ENCODE measurements at regions of chr2 and their contacts with region 1.

Region 1: DNA sequence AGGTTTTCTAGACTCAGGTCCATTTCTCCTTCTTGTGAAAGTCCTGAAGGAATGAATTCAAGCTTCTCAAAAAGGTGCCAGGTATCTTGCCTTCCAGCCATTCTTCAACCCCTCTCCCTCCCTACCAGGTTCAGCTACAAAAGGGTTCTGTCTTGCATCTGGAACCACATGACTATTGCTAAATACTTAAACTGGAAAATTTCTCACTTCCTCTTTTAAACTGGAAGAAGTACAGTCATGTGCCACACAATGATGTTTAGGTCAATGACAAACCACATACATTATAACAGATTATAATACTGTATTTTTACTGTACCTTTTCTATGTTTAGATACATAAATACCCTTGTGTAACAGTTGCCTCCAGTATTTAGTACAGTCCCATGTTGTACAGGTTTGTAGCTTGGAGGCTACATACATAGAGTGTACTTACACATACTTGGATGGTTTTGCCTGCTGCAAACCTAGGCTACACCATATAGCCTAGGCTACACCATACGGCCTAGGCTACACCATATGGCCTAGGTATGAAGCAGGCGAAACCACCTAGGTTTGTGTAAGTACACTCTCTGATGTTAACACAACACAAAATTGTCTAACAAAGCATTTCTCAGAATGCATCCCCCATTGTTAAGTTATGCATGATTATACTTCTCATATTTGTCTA is 142.0 kb upstream of the DNMT3A start:
- DNase-seq: no peak
- ATAC-seq: peak; percentile 90
- H3K4me3 ChIP-seq: no peak overlapping the region
- H3K27ac ChIP-seq: peak overlapping the region; percentile 54
- H3K4me1 ChIP-seq: peaks cover 9% of the 10 kb centered on the region
- H3K27me3 ChIP-seq: no peaks in the 10 kb centered on the region
- CTCF ChIP-seq: no peak
- EP300 ChIP-seq: peak; percentile 59 to 62; a peak in 2 of 4 replicates
- POLR2A ChIP-seq: no peak
- RAD21 ChIP-seq: no peak

Region 2: GRCh38 chr2:25467734-25468133 is 16.0 kb before region 1 on chr2:
- CTCF ChIA-PET with region 1: interaction called, 4 read pairs
- POLR2A ChIA-PET with region 1: no interaction called
- RAD21 ChIA-PET with region 1: interaction called, 5 read pairs
- SMC1A ChIA-PET with region 1: interaction called, 10 read pairs
- in situ Hi-C with region 1: no loop called
- intact Hi-C with region 1: no loop called
- DNase-seq: no peak
- ATAC-seq: no peak
- H3K4me3 ChIP-seq: no peak overlapping the region
- H3K27ac ChIP-seq: no peak overlapping the region
- H3K4me1 ChIP-seq: no peaks in the 10 kb centered on the region
- H3K27me3 ChIP-seq: no peaks in the 10 kb centered on the region
- CTCF ChIP-seq: no peak
- EP300 ChIP-seq: no peak
- POLR2A ChIP-seq: no peak
- RAD21 ChIP-seq: no peak

Region 3: DNA sequence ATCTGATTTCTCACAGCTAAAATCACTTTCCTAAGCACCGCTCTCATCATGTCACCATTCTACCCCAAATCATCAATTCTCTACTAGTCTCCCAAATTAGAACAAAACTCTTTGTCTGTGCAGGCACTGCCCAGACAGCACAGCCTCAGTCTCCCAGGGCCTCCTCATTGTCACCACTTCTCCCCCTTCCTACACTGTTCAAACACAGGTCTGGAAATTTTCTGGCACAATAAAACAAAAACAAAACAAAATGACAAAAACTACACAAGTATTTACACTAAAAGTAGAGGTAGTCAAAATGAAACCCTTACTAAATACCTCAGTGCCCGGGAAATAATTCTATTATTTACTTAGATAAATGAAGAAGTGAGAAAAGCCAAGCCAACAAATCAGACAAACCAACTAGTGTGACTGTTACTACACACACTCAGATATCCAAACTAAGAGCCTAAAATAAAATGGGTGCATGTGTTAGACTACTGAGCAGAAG is 14.2 kb after region 1 on chr2:
- CTCF ChIA-PET with region 1: interaction called, 8 read pairs
- POLR2A ChIA-PET with region 1: interaction called, 9 read pairs
- RAD21 ChIA-PET with region 1: interaction called, 10 read pairs
- SMC1A ChIA-PET with region 1: interaction called, 12 read pairs
- in situ Hi-C with region 1: no loop called
- intact Hi-C with region 1: no loop called
- DNase-seq: no peak
- ATAC-seq: peak; percentile 92
- H3K4me3 ChIP-seq: no peak overlapping the region
- H3K27ac ChIP-seq: peak overlapping the region; percentile 65
- H3K4me1 ChIP-seq: peaks cover 15% of the 10 kb centered on the region
- H3K27me3 ChIP-seq: no peaks in the 10 kb centered on the region
- CTCF ChIP-seq: no peak
- EP300 ChIP-seq: peak; percentile 35 to 60; a peak in 2 of 4 replicates
- POLR2A ChIP-seq: no peak
- RAD21 ChIP-seq: no peak